ENCODE measurements at regions of chr15 and their contacts with region 1.

Region 1: GRCh38 chr15:94163999-94164807 is 67.2 kb upstream of the MCTP2 start:
- DNase-seq: peak; percentile 51
- ATAC-seq: peak; percentile 65
- H3K4me3 ChIP-seq: no peak overlapping the region
- H3K27ac ChIP-seq: no peak overlapping the region
- H3K4me1 ChIP-seq: no peaks in the 10 kb centered on the region
- H3K27me3 ChIP-seq: no peaks in the 10 kb centered on the region; the same call in 1 of the 2 replicates
- CTCF ChIP-seq: peak; percentile 71
- POLR2A ChIP-seq: no peak
- RAD21 ChIP-seq: peak; percentile 86

Region 2: DNA sequence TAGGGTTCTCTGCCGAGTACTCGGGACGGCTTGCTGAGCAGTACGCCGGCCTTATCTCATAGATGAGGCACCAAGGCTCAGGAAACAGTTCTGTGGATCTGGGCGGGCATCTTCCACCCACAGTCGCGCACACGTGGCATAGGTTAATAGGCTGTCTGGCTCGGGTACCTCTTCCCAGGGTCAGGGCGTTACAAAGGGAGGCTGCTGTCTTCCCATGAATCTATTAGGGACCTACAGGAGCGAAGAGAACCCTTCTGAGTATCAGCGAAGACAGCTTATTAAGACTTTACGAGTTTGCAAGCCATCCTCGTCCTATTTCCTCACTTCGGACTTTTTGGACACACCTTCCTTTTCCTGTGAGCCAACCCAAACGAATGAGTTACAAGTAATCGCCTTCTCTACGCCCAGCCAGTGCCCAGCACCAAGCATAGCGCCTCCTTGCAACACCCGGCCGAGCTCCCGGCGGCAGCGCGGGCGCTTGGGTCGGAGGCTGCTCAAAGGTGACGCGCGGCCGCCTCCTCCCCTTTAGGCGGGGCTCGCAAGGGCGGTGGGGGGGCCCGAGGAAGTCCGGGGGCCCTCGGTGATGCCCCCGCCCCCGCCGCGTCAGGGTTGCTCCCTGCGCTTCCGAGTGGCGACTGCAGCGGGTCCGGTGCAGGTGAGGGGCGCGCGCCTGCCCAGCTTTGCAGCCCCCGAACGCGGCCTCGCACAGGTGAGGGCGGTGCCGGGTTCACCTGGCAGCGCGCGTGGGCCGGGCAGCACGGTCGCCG is 66.9 kb after region 1 on chr15 and contains the start of gene MCTP2:
- CTCF ChIA-PET with region 1: interaction called, 6 read pairs
- POLR2A ChIA-PET with region 1: no interaction called
- dilution Hi-C with region 1: no loop called
- in situ Hi-C with region 1: no loop called
- intact Hi-C with region 1: loop called (anchors 5 kb)
- DNase-seq: peak; percentile 70
- ATAC-seq: peak; percentile 94
- H3K4me3 ChIP-seq: peak within 1 kb of the TSS; percentile 85
- H3K27ac ChIP-seq: peak within 1 kb of the TSS; percentile 38
- H3K4me1 ChIP-seq: peaks cover 3% of the 10 kb centered on the region
- H3K27me3 ChIP-seq: no peaks in the 10 kb centered on the region
- CTCF ChIP-seq: 0 out of 2 replicates have a peak, but pooled peaks have one; percentile 7
- POLR2A ChIP-seq: 0 out of 2 replicates have a peak, but pooled peaks have one; percentile 50
- RAD21 ChIP-seq: no peak
- total RNA-seq, gene MCTP2: 8.6 and 9.9 TPM in 2 replicates

Region 3: DNA sequence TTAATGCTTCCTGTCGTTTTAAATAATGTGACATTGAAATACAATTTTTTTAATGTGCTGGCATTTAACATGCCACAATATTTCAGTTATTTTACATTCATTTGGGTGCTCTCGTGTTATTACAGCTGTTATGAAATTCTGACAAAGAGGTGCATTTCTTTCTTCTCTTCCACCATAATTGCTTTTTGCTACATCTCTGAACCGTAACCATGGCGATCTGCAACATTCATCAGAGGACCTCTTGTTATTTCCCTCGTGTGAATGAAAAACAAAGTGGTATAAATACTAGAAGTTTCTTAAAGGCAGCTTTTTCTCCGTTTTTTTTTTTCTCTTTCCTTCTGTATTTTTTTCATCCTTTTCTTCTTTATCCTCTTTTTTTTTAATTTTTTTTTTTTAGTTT is 383.5 kb after region 1 on chr15:
- CTCF ChIA-PET with region 1: no interaction called
- POLR2A ChIA-PET with region 1: no interaction called
- dilution Hi-C with region 1: no loop called
- in situ Hi-C with region 1: no loop called
- intact Hi-C with region 1: no loop called
- DNase-seq: no peak
- ATAC-seq: no peak
- H3K4me3 ChIP-seq: no peak overlapping the region
- H3K27ac ChIP-seq: no peak overlapping the region
- H3K4me1 ChIP-seq: no peaks in the 10 kb centered on the region
- H3K27me3 ChIP-seq: no peaks in the 10 kb centered on the region
- CTCF ChIP-seq: no peak
- POLR2A ChIP-seq: no peak
- RAD21 ChIP-seq: no peak

Measured in IMR-90 (cell line).